ENCODE measurements at regions of chr3 and their contacts with region 1.

Region 1: DNA sequence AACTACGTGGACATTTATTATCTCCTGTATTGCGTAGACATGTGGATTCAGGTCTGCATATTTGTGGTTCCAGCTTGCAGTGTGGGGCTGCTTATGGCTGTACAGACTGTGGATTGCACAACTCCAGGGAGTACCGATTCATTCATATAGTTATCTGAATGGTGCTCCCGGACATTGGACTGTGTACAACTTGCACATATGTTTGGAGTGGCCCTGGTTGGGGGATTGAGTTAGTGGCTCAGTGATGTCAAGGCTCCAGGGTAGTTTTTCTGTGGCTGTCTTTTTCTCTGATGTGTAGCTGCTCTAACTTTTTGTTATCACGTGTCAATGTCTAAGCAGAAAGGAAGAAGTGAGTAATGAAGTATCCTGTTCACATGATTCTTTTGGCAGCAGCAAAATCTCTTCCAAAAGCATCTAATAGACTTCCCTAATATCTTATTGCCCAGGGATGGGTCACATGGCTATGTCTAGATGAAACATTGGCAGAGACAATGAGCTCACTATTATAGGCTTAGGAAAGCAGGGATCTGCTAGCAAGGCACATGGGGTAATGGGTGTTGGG is 15.8 kb downstream of the ST3GAL6 start:
- DNase-seq: peak; percentile 77 to 95 (median 94)
- H3K4me3 ChIP-seq: peak overlapping the region in 2 of 3 experiments; percentile 16 to 49
- H3K4me3 Mint-ChIP-seq: peak overlapping the region; percentile 16 to 68
- H3K27ac ChIP-seq: peak overlapping the region; percentile 70 to 94
- H3K27ac Mint-ChIP-seq: peak overlapping the region; percentile 93 to 98 (median 96)
- H3K4me1 ChIP-seq: peaks cover 42 to 69% of the 10 kb centered on the region in 2 donors
- H3K4me1 Mint-ChIP-seq: peaks cover 61% of the 10 kb centered on the region
- H3K27me3 ChIP-seq: no peaks in the 10 kb centered on the region
- H3K27me3 Mint-ChIP-seq: no peaks in the 10 kb centered on the region
- CTCF ChIP-seq: no peak

Region 2: GRCh38 chr3:98732286-98733052 is 46.5 kb before region 1 on chr3:
- intact Hi-C with region 1: loop called in 1 of 2 experiments (anchors 5 kb)
- DNase-seq: peak in 2 of 3 donors; percentile 23
- H3K4me3 ChIP-seq: peak overlapping the region; percentile 70 to 89 (median 80)
- H3K4me3 Mint-ChIP-seq: peak overlapping the region; percentile 93 to 97
- H3K27ac ChIP-seq: peak overlapping the region in 1 of 2 donors; percentile 52
- H3K27ac Mint-ChIP-seq: peak overlapping the region; percentile 3 to 86 (median 80)
- H3K4me1 ChIP-seq: peaks cover 38 to 45% of the 10 kb centered on the region in 2 donors
- H3K4me1 Mint-ChIP-seq: peaks cover 37% of the 10 kb centered on the region
- H3K27me3 ChIP-seq: peaks cover 0 to 4% of the 10 kb centered on the region in 2 donors
- H3K27me3 Mint-ChIP-seq: peaks cover 0 to 12% (median 10%) of the 10 kb centered on the region in 3 donors
- CTCF ChIP-seq: no peak

Region 3: DNA sequence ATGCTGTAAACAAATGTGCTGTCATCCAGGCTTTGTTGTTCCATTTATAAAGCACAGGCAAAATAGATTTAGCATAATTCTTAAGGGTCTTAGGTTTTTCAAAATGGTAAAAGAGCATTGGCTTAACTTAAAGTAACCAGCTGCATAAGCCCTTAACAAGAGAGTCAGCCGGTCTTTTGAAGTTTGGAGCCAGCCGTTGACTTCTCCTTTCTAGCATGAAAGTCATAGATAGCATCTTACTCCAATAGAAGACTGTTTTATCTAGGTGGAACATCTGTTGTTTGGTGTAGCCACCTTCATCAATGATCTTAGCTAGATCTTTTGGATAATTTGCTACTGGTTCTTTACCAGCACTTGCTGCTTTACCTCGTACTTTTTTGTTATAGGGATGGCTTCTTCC is 420.1 kb after region 1 on chr3:
- intact Hi-C with region 1: no loop called
- DNase-seq: no peak
- H3K4me3 ChIP-seq: no peak overlapping the region
- H3K4me3 Mint-ChIP-seq: no peak overlapping the region
- H3K27ac ChIP-seq: no peak overlapping the region
- H3K27ac Mint-ChIP-seq: no peak overlapping the region
- H3K4me1 ChIP-seq: no peaks in the 10 kb centered on the region
- H3K4me1 Mint-ChIP-seq: no peaks in the 10 kb centered on the region
- H3K27me3 ChIP-seq: no peaks in the 10 kb centered on the region
- H3K27me3 Mint-ChIP-seq: peaks cover 0 to 2% (median 0%) of the 10 kb centered on the region in 3 donors
- CTCF ChIP-seq: no peak

Region 4: DNA sequence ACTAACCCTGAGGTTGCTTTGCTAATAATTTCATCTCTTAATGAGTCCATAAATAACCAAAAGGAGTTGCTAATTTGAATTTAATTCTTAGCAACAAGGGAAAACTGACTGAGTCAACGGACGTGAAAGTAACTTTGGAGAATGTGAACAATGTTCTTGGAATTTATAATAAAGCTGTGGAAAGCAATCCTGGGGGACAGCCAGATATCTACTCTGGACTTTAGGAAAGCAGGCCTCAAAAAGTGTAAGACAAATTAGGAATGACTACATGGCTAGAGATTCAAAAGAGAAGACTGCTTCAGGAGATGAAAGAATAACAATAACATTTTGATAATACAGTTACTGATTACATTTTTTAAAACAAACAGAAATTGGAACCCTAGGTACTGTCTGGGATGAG is 541.0 kb after region 1 on chr3:
- intact Hi-C with region 1: no loop called
- DNase-seq: no peak
- H3K4me3 ChIP-seq: no peak overlapping the region
- H3K4me3 Mint-ChIP-seq: no peak overlapping the region
- H3K27ac ChIP-seq: no peak overlapping the region
- H3K27ac Mint-ChIP-seq: no peak overlapping the region
- H3K4me1 ChIP-seq: no peaks in the 10 kb centered on the region
- H3K4me1 Mint-ChIP-seq: no peaks in the 10 kb centered on the region
- H3K27me3 ChIP-seq: no peaks in the 10 kb centered on the region
- H3K27me3 Mint-ChIP-seq: peaks cover 0 to 1% (median 0%) of the 10 kb centered on the region in 3 donors
- CTCF ChIP-seq: no peak